Pancreas (tissue), 10 donors: ENCODE measurements at regions of chr1 and their contacts with region 1.

Region 1: GRCh38 chr1:32706491-32706890 is 3.9 kb upstream of the SYNC start:
- DNase-seq: no peak
- ATAC-seq: peak in 1 of 4 donors; percentile 36
- H3K4me3 ChIP-seq: no peak overlapping the region
- H3K27ac ChIP-seq: no peak overlapping the region
- H3K4me1 ChIP-seq: peaks cover 0 to 2% (median 0%) of the 10 kb centered on the region in 3 donors
- H3K27me3 ChIP-seq: no peaks in the 10 kb centered on the region
- CTCF ChIP-seq: no peak

Region 2: DNA sequence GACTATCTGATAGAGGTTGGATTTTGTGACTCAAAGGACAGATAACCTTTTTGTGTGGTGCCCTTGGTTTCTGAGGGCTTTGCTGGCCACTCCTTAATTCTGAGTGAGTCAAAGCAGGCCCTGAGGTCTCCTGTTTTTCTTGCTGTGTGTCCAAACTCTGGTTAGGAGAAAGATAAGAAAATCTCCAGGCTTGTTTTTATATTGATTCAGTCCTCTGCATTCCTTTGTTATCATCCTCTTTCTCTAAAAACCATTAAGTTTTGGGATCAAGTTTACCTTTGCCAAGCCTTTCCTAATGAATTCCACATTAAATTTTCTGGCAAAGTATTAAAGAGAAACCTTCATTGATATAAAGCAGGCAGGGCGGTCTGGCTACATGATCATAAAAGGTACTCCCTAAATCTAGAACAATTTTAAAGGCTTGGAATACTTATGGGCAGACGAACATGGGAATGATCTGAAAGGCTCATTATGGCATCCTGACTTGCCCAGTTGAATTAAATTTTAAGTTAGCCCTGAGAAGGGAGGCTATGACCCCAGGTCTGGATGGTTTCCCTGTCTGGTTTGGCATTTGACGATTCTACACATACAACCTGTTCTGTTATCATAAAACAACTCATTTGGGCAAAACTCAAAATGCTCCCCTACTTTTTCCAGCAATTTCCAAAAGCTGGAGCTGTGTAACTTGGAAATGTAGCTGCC is 220.8 kb before region 1 on chr1:
- intact Hi-C with region 1: no loop called
- DNase-seq: no peak
- ATAC-seq: no peak
- H3K4me3 ChIP-seq: no peak overlapping the region
- H3K27ac ChIP-seq: no peak overlapping the region
- H3K4me1 ChIP-seq: no peaks in the 10 kb centered on the region
- H3K27me3 ChIP-seq: no peaks in the 10 kb centered on the region
- CTCF ChIP-seq: no peak

Region 3: GRCh38 chr1:32817159-32817814 is 110.8 kb after region 1 on chr1 and contains the starts of genes S100PBP and YARS1:
- intact Hi-C with region 1: no loop called
- DNase-seq: peak; percentile 99 to 100 (median 99)
- ATAC-seq: peak; percentile 93 to 97 (median 94)
- H3K4me3 ChIP-seq: peak within 1 kb of the TSS; percentile 65 to 96 (median 86)
- H3K27ac ChIP-seq: peak within 1 kb of the TSS; percentile 76 to 89 (median 88)
- H3K4me1 ChIP-seq: peaks cover 18 to 41% (median 20%) of the 10 kb centered on the region in 3 donors
- H3K27me3 ChIP-seq: no peaks in the 10 kb centered on the region
- CTCF ChIP-seq: no peak
- total RNA-seq, gene S100PBP: 7.6 to 20.2 (median 10.3) TPM
- total RNA-seq, gene YARS1: 32.9 to 135 (median 38.3) TPM

Region 4: DNA sequence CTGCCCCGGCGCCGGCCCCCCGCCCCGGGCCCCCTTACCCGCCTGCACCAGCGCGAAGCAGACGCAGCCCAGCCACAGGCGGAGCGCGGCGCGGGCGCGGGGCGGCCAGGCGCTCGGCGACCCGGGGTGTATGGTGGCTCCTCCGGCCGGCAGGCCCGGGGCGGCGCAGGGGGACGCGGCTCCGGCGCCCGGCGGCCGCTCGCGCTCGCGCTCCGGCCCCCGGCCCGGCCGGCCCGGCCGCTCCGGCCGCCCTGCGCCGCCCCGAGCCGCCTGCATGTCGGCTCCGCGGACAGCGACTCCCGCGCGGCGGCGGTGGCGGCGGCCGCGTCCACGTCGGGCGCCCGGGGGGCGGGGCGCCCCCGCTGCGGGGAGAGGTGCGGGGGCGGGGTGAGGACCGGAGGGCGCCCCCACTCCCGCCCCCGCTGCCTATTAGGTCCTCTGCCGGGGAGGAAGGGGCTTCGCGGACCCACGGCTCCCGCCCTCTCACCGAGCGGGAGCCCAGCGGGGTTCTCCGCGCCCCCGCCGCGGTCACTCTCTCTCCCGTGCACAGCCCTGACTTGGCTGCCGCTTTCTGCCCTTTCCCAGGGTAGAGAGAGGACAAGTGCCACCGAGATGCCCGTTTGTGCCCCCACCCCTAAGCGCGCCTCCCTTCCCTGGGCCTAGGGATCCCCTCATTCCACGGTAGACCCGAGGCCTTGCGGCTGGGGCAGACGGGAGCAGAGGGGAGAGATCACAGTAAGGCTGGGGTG is 164.3 kb after region 1 on chr1 and contains the start of gene FNDC5:
- intact Hi-C with region 1: loop called in 1 of 3 experiments (anchors 5 kb)
- DNase-seq: peak in 4 of 6 donors; percentile 15 to 78 (median 42)
- ATAC-seq: peak; percentile 63 to 85 (median 76)
- H3K4me3 ChIP-seq: peak within 1 kb of the TSS in 3 of 4 donors; percentile 16 to 48 (median 40)
- H3K27ac ChIP-seq: no peak within 1 kb of the TSS
- H3K4me1 ChIP-seq: no peaks in the 10 kb centered on the region
- H3K27me3 ChIP-seq: no peaks in the 10 kb centered on the region
- CTCF ChIP-seq: no peak
- total RNA-seq, gene FNDC5: 0.28 to 0.89 (median 0.59) TPM